ENCODE measurements at regions of chr3 and their contacts with region 1.

Region 1: GRCh38 chr3:151210676-151211381 is 7.8 kb upstream of the GPR171 start:
- DNase-seq: no peak
- ATAC-seq: no peak
- H3K4me3 ChIP-seq: no peak overlapping the region
- H3K27ac ChIP-seq: no peak overlapping the region
- H3K4me1 ChIP-seq: no peaks in the 10 kb centered on the region
- H3K27me3 ChIP-seq: no peaks in the 10 kb centered on the region
- CTCF ChIP-seq: no peak

Region 2: GRCh38 chr3:151178208-151178845 is 32.5 kb before region 1 on chr3:
- intact Hi-C with region 1: loop called in 1 of 2 experiments (anchors 5 kb)
- DNase-seq: no peak
- ATAC-seq: no peak
- H3K4me3 ChIP-seq: no peak overlapping the region
- H3K27ac ChIP-seq: no peak overlapping the region
- H3K4me1 ChIP-seq: peaks cover 12% of the 10 kb centered on the region
- H3K27me3 ChIP-seq: no peaks in the 10 kb centered on the region
- CTCF ChIP-seq: no peak

Measured in psoas muscle (tissue), 8 donors.